ENCODE measurements at regions of chr2 and their contacts with region 1.

Region 1: GRCh38 chr2:70871398-70872211 is 36.0 kb upstream of the CD207 start:
- DNase-seq: peak in 1 of 2 donors; percentile 88
- H3K4me3 ChIP-seq: peak overlapping the region; percentile 3 to 42
- H3K27ac ChIP-seq: no peak overlapping the region
- H3K4me1 ChIP-seq: peaks cover 0 to 2% of the 10 kb centered on the region in 2 donors
- H3K27me3 ChIP-seq: no peaks in the 10 kb centered on the region
- CTCF ChIP-seq: peak; percentile 71 to 90 (median 85)

Region 2: DNA sequence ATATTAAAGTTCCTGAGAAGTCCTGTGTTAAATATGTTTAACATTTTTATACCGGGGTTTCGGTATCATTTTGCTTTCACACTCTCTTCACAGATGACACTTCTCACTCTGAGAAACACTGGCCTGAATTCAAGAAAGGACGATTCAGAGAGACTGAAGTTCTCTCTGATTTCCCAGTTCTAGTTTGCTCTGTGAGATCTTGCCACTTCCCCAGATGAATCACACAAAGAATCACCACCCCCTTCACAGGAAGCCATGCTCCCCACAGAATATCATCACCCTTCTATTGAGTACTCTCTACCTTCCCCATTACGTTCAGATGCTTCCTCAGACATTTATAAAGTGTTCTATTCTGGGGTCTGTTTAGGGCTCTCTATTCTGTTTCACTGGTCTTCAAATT is 19.9 kb before region 1 on chr2:
- intact Hi-C with region 1: no loop called
- DNase-seq: no peak
- H3K4me3 ChIP-seq: no peak overlapping the region
- H3K27ac ChIP-seq: no peak overlapping the region
- H3K4me1 ChIP-seq: no peaks in the 10 kb centered on the region
- H3K27me3 ChIP-seq: no peaks in the 10 kb centered on the region
- CTCF ChIP-seq: no peak

Region 3: GRCh38 chr2:70948337-70949003 is 76.9 kb after region 1 on chr2:
- intact Hi-C with region 1: loop called (anchors 1 kb)
- DNase-seq: peak in 1 of 2 donors; percentile 88
- H3K4me3 ChIP-seq: peak overlapping the region; percentile 46 to 63
- H3K27ac ChIP-seq: no peak overlapping the region
- H3K4me1 ChIP-seq: no peaks in the 10 kb centered on the region
- H3K27me3 ChIP-seq: no peaks in the 10 kb centered on the region
- CTCF ChIP-seq: peak; percentile 72 to 94 (median 85)

Region 4: GRCh38 chr2:71000780-71001591 is 129.4 kb after region 1 on chr2:
- intact Hi-C with region 1: loop called (anchors 5 kb)
- DNase-seq: peak in 1 of 2 donors; percentile 86
- H3K4me3 ChIP-seq: peak overlapping the region in 1 of 2 donors; percentile 43
- H3K27ac ChIP-seq: no peak overlapping the region
- H3K4me1 ChIP-seq: no peaks in the 10 kb centered on the region
- H3K27me3 ChIP-seq: no peaks in the 10 kb centered on the region
- CTCF ChIP-seq: peak; percentile 77 to 97 (median 95)

Region 5: DNA sequence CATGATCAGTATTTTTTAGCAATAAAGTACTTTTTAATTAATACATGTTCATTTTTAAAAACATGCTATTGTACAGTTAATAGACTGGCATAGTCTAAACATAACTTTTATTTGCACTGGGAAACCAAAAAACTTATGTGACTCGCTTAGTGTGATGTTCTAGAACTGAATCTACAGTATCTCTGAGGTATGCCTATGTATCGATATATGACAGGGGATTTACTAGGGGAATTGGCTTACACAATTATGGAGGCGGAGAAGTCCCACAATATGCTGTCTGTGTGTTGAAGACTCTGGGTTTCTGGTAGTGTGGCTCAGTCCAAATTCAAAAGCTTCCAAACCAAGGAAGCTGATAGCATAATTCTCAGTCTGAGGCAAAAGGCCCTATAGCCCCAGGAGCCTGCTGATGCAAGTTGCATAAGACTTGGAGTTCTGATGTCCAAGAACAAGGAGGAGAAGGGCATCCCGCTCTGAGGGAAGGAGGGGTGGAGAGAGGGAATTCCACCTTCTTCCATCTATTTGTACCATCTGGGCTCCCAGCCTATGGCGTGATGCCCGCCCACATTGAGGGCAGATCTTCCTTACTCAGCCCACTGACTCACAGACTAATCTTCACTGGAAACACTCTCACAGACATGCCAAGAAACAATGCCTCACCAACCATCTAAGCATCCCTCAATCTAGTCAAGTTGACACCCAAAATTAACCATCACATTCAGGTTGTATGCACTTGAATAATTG is 487.5 kb after region 1 on chr2:
- intact Hi-C with region 1: no loop called
- DNase-seq: no peak
- H3K4me3 ChIP-seq: no peak overlapping the region
- H3K27ac ChIP-seq: no peak overlapping the region
- H3K4me1 ChIP-seq: no peaks in the 10 kb centered on the region
- H3K27me3 ChIP-seq: no peaks in the 10 kb centered on the region
- CTCF ChIP-seq: no peak

Measured in ascending aorta (tissue), 2 donors.